ENCODE measurements at regions of chr15 and their contacts with region 1.

Region 1: DNA sequence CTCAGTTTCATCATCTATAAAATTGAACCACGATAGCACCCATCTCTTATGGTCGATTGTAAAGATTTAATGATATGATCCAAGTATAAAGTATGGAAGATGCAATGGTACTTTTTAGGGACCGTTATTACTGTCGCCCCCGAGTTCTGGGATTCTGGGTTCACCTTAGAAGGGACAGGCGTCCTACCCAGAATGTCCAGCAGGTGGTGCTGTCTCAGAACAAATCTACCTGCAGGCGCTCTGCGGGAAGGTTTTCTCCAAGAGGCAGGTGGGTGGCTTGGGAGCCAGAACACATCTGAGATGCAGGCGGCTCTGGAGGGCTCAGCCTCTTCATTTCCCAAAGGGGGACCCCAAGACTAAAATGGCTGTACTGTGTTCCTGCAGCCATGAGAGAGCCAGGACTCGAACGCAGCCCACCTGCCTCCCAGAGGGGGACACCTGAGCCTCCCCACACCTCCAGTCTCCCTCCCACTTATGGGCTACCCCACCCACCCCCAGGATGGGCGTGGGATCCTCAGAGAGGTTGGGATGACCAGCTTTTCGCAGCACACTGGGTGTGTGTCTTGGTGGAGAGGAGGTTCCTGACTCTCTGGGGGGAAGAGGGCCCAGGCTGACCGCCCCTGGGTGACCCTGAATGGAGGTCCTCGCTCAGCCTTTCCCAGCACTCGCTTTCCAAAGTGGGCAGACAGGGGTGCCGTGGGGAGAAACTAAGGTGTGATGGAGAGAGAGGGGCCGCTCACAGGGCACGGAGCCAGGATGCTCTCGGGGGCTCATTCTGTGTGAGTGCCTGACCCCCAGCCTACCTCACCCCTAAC is 28.1 kb upstream of the CORO2B start:
- DNase-seq: peak; percentile 88
- H3K4me3 Mint-ChIP-seq: no peak overlapping the region
- H3K27ac Mint-ChIP-seq: no peak overlapping the region
- H3K4me1 Mint-ChIP-seq: peaks cover 6% of the 10 kb centered on the region
- H3K27me3 Mint-ChIP-seq: peaks cover 33% of the 10 kb centered on the region

Region 2: GRCh38 chr15:68252925-68253534 is 297.7 kb before region 1 on chr15:
- CTCF ChIA-PET with region 1: interaction called, 7 read pairs
- intact Hi-C with region 1: loop called (anchors 5 kb)
- DNase-seq: peak; percentile 62
- H3K4me3 Mint-ChIP-seq: no peak overlapping the region
- H3K27ac Mint-ChIP-seq: no peak overlapping the region
- H3K4me1 Mint-ChIP-seq: no peaks in the 10 kb centered on the region
- H3K27me3 Mint-ChIP-seq: peaks cover 3% of the 10 kb centered on the region

Region 3: DNA sequence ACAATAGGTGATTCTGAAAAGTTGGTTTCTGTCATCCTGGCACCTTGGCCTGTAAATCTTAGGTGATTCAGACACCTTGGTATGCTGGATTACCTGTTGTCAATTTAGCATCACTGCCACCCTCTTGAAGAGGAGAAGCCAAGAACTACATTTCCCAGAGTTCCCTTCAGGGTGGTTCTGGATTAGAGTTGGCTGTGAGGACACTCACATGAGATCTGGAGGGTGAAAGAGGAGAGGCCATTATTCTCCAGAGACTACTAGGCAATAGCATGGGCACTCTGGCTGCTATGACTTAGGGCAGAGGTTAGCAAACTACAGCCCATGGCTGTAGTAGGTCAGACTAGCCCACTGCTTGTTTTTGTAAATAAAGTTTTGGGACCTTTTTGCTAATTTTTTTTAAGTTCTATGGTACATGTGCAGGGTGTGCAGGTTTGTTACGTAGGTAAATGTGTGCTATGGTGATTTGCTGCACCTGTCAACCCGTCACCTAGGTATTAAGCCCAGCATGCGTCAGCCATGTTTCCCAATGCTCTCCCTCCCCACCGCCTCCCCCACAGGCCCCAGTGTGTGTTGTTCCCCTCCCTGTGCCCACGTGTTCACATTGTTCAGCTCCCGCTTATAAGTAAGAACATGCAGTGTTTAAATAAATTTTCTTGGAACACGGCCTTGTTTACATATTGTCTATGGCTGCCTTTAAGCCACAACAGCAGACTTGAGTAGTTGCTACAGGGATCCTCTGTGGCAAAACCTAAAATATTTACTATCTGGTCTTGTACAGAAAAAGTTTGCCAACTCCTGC is 13.4 kb before region 1 on chr15:
- CTCF ChIA-PET with region 1: interaction called, 28 read pairs
- intact Hi-C with region 1: no loop called
- DNase-seq: no peak
- H3K4me3 Mint-ChIP-seq: no peak overlapping the region
- H3K27ac Mint-ChIP-seq: no peak overlapping the region
- H3K4me1 Mint-ChIP-seq: no peaks in the 10 kb centered on the region
- H3K27me3 Mint-ChIP-seq: peaks cover 13% of the 10 kb centered on the region

Region 4: DNA sequence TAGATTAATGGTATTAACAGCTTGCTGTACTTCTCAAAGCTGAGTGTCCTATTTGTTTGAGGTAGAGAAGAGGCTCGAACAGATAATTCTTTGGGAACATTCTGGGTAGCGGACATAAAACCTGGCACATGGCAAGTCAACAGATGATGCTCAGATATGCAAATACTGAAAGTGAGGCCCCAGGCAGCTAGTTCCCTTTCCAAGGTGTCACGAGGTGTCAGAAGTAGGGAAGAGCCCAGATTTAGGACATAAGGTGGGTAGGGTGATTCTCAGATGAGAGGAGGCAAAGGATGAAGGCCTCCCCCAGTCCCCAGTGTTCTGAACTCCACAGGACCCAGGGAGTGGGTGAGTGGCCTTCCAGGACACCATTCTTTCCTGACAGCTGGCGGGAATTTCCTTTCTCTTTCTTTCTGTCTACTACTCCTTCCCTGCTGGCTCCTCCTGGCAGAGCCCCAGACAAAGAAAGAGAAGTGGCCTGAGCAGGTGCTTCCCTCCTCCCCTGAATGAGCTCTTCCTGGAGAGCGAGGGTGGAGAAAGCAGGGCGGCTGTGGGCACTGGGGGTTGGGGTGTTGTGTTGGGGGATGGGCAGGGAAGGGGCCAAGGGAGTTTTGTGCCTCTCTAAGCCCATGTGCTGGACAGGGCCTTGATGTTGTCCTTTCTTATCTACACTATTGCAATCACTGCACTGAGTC is 115.6 kb after region 1 on chr15:
- CTCF ChIA-PET with region 1: interaction called, 184 read pairs
- intact Hi-C with region 1: no loop called
- DNase-seq: no peak
- H3K4me3 Mint-ChIP-seq: no peak overlapping the region
- H3K27ac Mint-ChIP-seq: no peak overlapping the region
- H3K4me1 Mint-ChIP-seq: no peaks in the 10 kb centered on the region
- H3K27me3 Mint-ChIP-seq: no peaks in the 10 kb centered on the region

Region 5: GRCh38 chr15:68672781-68673205 is 122.1 kb after region 1 on chr15:
- CTCF ChIA-PET with region 1: interaction called, 184 read pairs
- intact Hi-C with region 1: loop called (anchors 1 kb)
- DNase-seq: no peak
- H3K4me3 Mint-ChIP-seq: no peak overlapping the region
- H3K27ac Mint-ChIP-seq: no peak overlapping the region
- H3K4me1 Mint-ChIP-seq: peaks cover 3% of the 10 kb centered on the region
- H3K27me3 Mint-ChIP-seq: peaks cover 11% of the 10 kb centered on the region

Region 6: DNA sequence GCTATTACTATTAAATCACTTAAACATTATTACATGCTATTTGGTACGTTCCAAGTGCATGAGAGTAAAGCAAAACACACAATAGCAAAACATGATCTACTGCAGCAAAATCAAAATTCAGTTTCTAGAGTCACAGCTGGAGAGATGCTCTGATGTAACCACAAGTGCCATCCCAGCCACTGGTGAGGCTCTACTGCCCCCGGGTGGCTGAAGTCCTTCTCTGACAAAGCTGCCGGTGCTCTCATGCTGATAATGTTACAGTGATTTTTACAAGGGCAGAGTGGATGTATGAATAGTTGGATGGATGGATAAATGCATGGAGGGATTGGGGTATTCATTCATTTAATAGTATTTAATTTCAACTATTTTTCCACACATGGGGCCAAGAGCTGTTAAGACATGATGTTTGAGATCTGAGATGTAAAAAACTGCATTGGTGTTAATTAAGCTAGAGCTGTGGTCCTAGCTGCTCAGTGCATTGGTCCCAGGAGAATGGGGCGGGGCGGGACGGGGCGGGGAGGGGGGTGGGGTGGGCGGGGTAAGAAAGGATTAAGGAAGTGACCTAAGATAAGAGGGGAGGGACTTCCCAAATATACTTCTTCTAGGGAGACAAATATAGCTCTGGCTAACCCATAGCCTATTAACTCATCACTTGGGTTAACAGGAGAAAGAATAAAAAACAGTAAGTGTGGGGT is 374.3 kb after region 1 on chr15:
- CTCF ChIA-PET with region 1: interaction called, 24 read pairs
- intact Hi-C with region 1: loop called (anchors 2 kb)
- DNase-seq: peak; percentile 85
- H3K4me3 Mint-ChIP-seq: no peak overlapping the region
- H3K27ac Mint-ChIP-seq: no peak overlapping the region
- H3K4me1 Mint-ChIP-seq: no peaks in the 10 kb centered on the region
- H3K27me3 Mint-ChIP-seq: peaks cover 24% of the 10 kb centered on the region